Spleen (tissue), 13 donors: ENCODE measurements at regions of chr4 and their contacts with region 1.

Region 1: GRCh38 chr4:17238638-17239037 is 273.3 kb downstream of the QDPR start:
- DNase-seq: no peak
- H3K4me3 ChIP-seq: no peak overlapping the region
- H3K27ac ChIP-seq: no peak overlapping the region
- H3K4me1 ChIP-seq: no peaks in the 10 kb centered on the region
- H3K27me3 ChIP-seq: no peaks in the 10 kb centered on the region
- CTCF ChIP-seq: no peak
- POLR2A ChIP-seq: no peak

Region 2: GRCh38 chr4:16707874-16708273 is 530.8 kb before region 1 on chr4:
- intact Hi-C with region 1: no loop called
- DNase-seq: no peak
- H3K4me3 ChIP-seq: no peak overlapping the region
- H3K27ac ChIP-seq: peak overlapping the region in 6 of 8 donors; percentile 37 to 63 (median 44)
- H3K4me1 ChIP-seq: peaks cover 0 to 10% (median 2%) of the 10 kb centered on the region in 6 donors
- H3K27me3 ChIP-seq: no peaks in the 10 kb centered on the region
- CTCF ChIP-seq: no peak
- POLR2A ChIP-seq: no peak

Region 3: GRCh38 chr4:17195461-17196275 is 43.0 kb before region 1 on chr4:
- intact Hi-C with region 1: loop called (anchors 2 kb)
- DNase-seq: no peak
- H3K4me3 ChIP-seq: no peak overlapping the region
- H3K27ac ChIP-seq: no peak overlapping the region
- H3K4me1 ChIP-seq: no peaks in the 10 kb centered on the region
- H3K27me3 ChIP-seq: no peaks in the 10 kb centered on the region
- CTCF ChIP-seq: no peak
- POLR2A ChIP-seq: no peak